Right cardiac atrium (tissue), 5 donors: ENCODE measurements at regions of chr2 and their contacts with region 1.

Region 1: DNA sequence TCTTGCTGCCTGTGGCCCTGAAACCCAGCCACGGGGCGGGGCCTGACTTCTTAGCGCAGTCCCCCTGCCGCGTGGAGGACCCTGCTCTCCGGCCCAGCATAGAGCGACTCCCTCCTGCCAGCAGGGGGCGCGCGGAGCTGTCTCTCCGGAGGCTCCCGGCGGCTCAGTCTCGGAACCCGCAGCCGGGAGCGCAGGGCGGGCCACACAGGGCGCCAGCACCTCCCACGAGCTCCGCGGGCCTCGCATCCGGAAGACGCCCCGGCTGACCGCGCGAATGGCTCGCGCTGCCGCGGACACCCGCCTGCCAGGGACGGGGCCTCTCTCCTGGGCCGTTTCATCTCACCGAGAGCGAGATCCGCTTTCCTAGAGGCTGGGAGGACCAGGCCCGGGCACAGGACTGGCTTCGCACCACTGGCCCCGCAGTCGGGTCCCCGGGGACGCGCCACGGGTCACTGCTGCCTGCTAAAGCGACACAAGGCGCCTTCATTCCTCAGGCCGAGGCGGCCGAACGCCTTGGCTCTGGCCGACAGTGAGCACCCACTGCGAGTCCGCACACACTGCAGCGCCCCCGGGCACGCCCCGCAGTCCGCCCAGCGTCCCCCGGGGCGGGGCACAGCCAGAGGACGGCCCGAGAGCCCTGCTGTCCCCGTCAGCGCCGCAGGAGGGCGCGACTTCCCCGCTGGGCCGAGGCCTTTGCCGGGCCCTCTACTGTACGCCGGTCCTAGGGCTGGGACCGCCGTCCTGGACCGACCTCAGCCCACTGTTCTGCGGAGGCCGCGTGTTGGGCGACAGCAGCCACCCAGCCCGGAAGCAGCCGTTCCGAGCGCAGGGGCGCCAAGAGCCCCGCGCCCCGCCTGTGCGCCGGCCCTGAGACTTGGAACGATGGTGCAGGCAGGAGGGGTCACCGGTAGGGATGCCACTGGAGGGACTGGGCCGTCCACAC is 39.0 kb upstream of the ARHGEF4 start:
- DNase-seq: peak; percentile 94 to 97 (median 96)
- ATAC-seq: peak; percentile 97 to 98
- H3K4me3 ChIP-seq: peak overlapping the region; percentile 61
- H3K27ac ChIP-seq: peak overlapping the region; percentile 38
- H3K4me1 ChIP-seq: no peaks in the 10 kb centered on the region
- H3K27me3 ChIP-seq: no peaks in the 10 kb centered on the region

Region 2: DNA sequence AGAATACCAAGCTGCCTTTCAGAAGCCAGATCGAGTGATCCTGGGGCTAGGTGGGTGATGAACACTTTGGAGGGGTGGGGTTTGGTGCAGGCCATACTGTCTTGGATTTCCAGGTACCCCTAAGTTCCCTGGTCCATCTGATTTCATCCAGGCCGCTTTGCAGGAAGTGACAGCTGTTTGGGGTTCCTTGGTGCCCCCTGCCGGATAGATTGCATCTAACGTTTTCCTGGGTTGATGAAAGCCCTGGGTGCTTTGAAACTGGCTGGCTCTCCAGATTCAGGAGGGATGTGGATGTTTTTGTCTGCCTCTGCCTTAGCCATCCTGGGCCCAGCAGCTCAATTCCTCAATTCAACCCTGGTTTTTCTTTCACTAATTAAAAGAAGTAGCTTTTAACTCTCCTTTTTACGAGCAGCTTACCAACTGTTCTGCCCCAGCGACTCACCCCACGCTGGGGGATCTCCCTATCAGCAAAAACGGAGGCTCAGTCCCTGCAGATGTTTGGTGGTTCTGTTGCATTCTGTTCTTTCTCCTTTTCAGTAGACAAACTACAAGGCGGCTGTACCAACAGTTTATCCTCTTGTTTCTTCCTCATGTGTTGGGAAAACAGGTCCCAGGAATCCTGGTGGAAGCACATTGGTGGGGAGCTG is 76.1 kb after region 1 on chr2:
- intact Hi-C with region 1: loop called (anchors 2 to 5 kb)
- DNase-seq: peak; percentile 67 to 85 (median 74)
- ATAC-seq: peak; percentile 60 to 76
- H3K4me3 ChIP-seq: no peak overlapping the region
- H3K27ac ChIP-seq: no peak overlapping the region
- H3K4me1 ChIP-seq: no peaks in the 10 kb centered on the region
- H3K27me3 ChIP-seq: no peaks in the 10 kb centered on the region

Region 3: DNA sequence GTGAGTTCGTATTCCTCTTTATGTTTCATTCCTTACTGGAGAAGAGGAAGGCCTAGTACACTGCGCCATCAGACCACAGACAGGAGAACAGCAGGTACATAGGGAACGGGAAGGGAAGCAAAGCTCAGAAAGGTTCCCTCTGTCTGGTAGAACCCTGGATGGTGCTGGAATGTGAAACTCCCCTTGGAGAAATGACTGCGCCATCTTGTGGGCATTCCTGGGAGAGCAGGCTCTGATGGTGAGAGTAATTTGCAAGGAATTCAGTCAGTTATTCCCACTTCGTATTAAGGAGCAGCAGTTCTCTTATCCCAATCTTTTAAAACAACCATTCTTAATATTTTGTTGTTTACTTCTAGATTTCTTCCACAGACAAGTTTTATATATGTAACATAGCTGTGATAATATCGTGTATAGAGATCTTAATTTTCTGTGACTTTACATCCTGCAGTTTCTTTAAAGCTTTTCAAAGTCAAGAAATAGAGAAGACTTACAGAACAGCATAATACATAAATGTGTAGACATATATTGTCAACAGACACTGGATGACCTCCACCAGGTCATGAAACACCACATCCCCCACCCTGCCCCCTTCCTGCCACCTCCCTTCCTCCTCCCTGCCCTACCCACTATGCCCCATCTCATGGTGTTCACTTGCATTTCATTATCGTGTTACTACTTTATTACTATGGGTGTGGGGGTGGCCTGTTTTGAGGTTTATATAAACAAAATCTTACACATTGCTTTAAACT is 122.8 kb after region 1 on chr2:
- intact Hi-C with region 1: loop called (anchors 5 kb)
- DNase-seq: peak; percentile 42 to 77 (median 74)
- ATAC-seq: peak; percentile 14 to 48
- H3K4me3 ChIP-seq: no peak overlapping the region
- H3K27ac ChIP-seq: no peak overlapping the region
- H3K4me1 ChIP-seq: no peaks in the 10 kb centered on the region
- H3K27me3 ChIP-seq: no peaks in the 10 kb centered on the region